Activated naive CD4-positive, alpha-beta T cell treated with anti-CD3 and anti-CD28 coated beads for 36 hours (primary cell): ENCODE measurements at regions of chr17 and their contacts with region 1.

Region 1: DNA sequence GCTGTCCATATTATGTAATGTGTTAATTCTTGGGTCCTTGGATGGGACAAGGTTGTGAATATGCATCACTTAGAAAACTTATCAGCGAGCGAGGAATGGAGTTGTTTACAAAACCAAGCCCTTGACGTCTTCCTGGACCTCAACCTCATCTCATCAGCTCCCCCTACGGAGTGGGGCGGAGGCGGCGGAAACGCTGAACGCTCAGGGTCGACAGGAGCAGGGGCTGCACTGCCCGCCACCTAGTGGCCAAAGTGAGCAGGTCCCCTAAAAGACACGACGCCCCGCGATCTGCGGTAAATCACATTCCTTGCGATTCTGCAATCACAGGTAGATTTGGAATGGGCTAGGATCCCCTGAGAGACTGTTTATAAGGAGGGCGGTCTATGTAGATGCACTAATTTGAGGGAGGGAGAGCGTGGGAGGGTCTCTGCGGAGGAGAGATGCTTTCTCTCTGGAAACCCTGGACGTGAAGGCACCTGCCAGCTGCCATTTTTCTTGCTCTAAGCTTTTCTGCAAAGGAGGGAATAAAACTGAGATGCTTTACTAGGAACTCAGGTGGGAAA is 5.4 kb upstream of the ICAM2 start:
- DNase-seq: peak; percentile 95
- H3K4me3 Mint-ChIP-seq: peak overlapping the region; percentile 75
- H3K27ac Mint-ChIP-seq: peak overlapping the region; percentile 75
- H3K4me1 Mint-ChIP-seq: peaks cover 61% of the 10 kb centered on the region
- H3K27me3 Mint-ChIP-seq: no peaks in the 10 kb centered on the region

Region 2: DNA sequence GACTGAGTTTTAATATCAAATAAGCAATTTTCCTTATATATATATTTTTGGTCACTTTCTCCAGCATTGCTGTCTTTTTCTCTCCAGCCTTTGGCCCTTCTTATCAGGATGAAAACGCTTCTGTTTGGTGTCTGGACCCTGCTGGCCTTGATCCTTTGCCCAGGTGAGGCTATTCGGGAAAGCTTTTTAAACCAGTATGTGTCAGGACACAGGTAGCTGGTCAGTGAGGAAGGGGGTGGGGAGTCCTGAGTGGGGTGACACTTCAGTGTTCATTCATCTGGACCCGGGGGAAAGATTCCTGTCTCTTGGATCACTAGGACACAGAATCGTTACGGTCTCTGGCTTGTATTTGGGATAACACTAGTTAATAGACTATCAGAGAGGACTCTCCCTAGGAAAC is 171.1 kb before region 1 on chr17:
- CTCF ChIA-PET with region 1: no interaction called
- intact Hi-C with region 1: no loop called
- DNase-seq: no peak
- H3K4me3 Mint-ChIP-seq: no peak overlapping the region
- H3K27ac Mint-ChIP-seq: no peak overlapping the region
- H3K4me1 Mint-ChIP-seq: no peaks in the 10 kb centered on the region
- H3K27me3 Mint-ChIP-seq: no peaks in the 10 kb centered on the region

Region 3: GRCh38 chr17:63931099-63931561 is 94.7 kb before region 1 on chr17:
- CTCF ChIA-PET with region 1: interaction called, 15 read pairs
- intact Hi-C with region 1: loop called (anchors 5 kb)
- DNase-seq: peak; percentile 68
- H3K4me3 Mint-ChIP-seq: peak overlapping the region; percentile 93
- H3K27ac Mint-ChIP-seq: peak overlapping the region; percentile 76
- H3K4me1 Mint-ChIP-seq: peaks cover 17% of the 10 kb centered on the region
- H3K27me3 Mint-ChIP-seq: no peaks in the 10 kb centered on the region

Region 4: GRCh38 chr17:64036198-64036922 is 10.5 kb after region 1 on chr17:
- CTCF ChIA-PET with region 1: interaction called, 22 read pairs
- intact Hi-C with region 1: no loop called
- DNase-seq: no peak
- H3K4me3 Mint-ChIP-seq: no peak overlapping the region
- H3K27ac Mint-ChIP-seq: no peak overlapping the region
- H3K4me1 Mint-ChIP-seq: no peaks in the 10 kb centered on the region
- H3K27me3 Mint-ChIP-seq: no peaks in the 10 kb centered on the region

Region 5: DNA sequence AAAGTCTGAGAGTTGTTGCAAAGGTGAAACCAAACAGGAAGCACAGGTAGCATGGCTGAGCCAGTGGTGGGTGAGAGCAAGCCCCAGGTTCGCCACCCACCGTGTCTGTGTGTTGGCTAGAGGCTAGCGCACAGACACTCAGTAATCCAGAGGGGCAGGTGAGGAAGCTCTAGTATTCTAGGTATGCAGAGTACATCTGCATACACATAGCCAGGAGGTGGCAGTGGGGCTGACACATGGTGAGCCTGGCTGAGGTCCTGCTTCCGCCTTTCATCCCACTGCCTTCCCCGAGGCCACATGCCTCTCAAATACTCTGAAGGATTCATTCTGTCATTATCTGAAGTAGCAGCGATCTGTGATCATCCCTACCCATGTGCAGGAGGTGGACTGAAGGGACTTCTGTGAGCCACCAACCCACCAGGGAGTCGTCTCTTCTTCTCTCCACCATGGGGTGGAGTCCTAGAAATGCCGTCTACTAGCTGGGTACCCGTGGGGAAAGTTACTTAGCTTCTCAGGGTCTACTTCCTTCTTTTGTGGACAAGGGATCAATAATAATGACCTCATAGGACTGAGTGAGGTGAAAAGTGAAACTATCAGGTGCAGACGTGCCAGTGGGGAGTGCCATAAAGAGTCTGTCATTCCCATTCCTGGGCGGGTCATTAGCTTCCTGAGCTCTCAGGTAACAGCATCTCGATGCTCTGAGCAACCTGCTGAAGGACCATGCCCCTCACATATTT is 30.6 kb after region 1 on chr17:
- CTCF ChIA-PET with region 1: interaction called, 21 read pairs
- intact Hi-C with region 1: loop called (anchors 2 kb)
- DNase-seq: no peak
- H3K4me3 Mint-ChIP-seq: no peak overlapping the region
- H3K27ac Mint-ChIP-seq: no peak overlapping the region
- H3K4me1 Mint-ChIP-seq: peaks cover 35% of the 10 kb centered on the region
- H3K27me3 Mint-ChIP-seq: no peaks in the 10 kb centered on the region

Region 6: DNA sequence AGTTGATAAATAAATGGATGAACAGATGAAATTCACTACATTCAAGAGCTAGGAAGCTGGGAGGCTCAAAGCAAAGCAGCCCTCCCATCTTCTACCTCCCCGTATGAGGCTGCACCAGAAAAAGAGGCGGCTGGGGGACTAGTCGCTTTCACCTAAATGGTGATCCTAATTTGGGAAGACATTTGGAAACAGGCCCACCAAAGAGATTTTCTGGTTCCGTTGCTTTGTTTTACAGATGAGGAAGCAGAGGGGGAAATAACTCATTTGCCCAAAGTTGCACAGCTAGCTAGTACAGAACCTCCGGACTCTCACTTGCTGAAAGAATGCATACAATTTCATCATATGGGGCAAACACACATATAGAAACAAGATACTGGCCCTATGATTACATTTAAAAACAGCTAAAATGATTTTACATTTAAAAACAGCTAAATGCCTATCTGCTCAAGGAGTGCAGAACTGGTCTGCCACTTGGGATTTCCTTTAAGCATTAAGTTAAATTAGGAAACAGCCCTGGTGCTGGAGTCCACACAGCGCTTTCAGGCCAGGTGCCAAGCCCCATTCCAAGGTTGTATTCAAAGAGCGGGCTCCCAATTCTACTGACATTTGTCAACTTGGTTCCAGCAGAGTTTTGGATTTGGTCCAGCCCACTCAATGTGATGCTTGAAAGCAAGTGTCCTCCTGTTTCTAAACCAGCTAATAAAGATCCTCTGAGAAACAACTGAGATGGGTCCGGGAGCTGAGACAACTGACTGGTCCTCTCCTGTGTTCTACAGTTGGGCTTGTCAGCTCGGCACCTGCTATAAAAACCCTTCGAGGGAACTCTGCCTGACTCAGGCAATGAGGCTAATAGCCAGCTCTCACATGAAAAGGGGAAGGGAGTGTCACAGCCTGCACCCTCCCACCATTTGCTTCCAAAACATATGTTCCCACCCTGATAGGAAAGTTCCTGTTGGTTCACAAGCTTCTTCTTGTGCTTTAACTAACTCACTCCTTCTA is 92.5 kb after region 1 on chr17:
- CTCF ChIA-PET with region 1: interaction called, 13 read pairs
- intact Hi-C with region 1: no loop called
- DNase-seq: no peak
- H3K4me3 Mint-ChIP-seq: no peak overlapping the region
- H3K27ac Mint-ChIP-seq: no peak overlapping the region
- H3K4me1 Mint-ChIP-seq: peaks cover 69% of the 10 kb centered on the region
- H3K27me3 Mint-ChIP-seq: no peaks in the 10 kb centered on the region

Region 7: DNA sequence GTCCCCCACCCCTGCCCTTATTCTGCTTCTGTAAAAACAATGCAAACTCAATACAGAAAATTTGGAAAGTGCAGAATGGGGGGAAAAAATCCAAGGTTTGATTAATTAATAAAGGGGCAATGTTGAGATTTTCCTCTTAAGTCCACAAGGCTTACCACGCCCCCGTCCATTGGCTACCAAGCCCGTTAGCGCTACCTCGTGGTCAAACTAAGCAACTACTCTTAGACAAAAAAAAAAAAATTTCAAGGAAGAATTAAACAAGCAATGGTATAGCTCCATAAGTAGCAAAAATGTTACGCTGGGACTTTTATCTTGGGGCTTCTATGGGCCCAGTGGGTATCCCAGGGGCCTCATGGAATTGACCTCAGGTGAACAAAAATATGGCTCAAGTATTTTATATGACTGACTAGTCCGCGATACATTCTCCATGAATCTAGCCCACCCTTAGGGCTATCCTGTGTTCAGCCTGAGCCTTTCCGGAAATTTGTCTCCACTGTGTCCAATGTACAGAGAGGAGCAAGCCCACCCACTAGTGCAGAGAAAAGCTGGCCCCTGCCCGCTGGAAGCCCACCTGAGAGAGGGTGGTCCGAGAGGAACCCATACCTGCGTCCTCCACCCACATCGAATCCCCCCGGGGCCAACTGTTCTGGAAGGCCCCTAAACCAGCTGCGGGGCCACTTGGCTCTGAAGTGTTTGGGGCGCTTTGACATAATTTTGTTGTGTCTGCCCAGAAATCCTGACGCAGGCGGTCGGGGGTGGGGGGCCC is 256.3 kb after region 1 on chr17:
- CTCF ChIA-PET with region 1: interaction called, 9 read pairs
- intact Hi-C with region 1: loop called (anchors 1 kb)
- DNase-seq: peak; percentile 67
- H3K4me3 Mint-ChIP-seq: no peak overlapping the region
- H3K27ac Mint-ChIP-seq: no peak overlapping the region
- H3K4me1 Mint-ChIP-seq: peaks cover 4% of the 10 kb centered on the region
- H3K27me3 Mint-ChIP-seq: no peaks in the 10 kb centered on the region